ENCODE measurements at regions of chr7 and their contacts with region 1.

Region 1: GRCh38 chr7:51366930-51367613 is 50.5 kb upstream of the COBL start:
- DNase-seq: peak in 40 of 42 donors; percentile 15 to 88 (median 64)

Region 2: DNA sequence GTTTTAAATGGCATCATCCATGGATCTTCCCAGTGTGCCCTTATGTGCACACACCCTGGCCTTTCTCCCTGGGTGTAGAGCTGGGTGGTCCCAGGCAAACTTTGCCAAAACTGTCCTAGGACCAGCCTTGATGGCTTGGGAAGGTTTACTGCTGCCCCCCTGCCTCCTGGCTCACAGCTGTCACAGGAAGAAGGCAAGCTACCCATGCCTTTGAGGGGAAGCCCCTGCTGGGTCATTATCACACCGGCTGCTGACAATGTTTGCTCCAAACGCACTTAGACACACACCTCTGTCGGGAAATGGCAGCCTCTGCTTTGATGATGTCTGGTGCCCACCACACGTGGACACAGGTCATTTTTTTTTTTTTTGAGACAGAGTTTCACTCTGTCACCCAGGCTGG is 891.7 kb before region 1 on chr7:
- intact Hi-C with region 1: no loop called
- DNase-seq: no peak

Region 3: DNA sequence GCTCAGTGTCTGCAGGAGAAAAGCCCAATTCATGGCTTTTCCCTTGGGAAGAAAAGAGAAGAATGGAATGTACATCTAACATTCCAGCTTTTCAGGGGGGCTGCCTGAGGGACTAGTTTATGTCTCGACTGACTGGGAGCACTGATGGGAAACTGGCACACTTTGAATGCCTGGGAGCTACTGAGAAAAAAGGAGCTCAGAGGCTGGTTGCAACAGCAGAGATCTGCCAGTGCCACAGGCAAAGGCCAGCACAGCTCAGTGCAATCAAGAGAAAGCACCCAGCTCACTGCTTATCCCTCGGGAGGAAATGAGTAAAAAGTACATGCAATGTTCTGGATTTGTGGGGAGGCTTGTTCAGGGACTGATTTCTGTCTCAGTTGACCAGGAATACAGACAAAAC is 276.7 kb before region 1 on chr7:
- intact Hi-C with region 1: no loop called
- DNase-seq: peak in 3 of 42 donors; percentile 35 to 40 (median 39)

Region 4: DNA sequence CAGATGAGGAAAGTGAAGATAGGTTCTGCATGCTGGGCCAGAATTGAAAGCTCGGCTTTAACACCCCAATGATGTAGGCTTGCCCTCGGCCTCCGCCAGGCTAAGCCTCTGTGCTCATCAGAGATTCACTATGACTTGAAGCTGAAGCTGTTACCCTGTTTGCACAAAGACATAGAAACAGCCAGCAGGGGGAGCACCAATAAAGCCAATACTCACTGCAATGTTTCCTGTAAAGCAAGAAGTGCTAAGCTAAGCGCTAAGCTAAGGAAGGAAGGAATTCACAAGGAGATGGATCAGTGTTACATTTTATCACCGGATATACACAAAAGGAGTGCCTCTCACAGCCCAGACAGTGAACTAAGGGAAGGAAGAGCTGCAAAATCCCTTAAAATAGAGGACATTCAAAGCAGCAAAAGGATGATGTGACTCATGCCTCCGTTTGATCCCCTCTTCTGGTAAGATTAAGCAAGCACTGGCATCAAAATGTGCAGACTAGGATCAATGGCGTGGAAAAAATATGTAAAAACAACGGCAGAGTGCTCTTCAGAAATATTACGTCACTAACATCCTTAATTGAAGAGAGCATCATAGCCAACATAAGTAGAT is 204.2 kb before region 1 on chr7:
- intact Hi-C with region 1: loop called (anchors 2 kb)
- DNase-seq: peak; percentile 52 to 97 (median 91)

Region 5: DNA sequence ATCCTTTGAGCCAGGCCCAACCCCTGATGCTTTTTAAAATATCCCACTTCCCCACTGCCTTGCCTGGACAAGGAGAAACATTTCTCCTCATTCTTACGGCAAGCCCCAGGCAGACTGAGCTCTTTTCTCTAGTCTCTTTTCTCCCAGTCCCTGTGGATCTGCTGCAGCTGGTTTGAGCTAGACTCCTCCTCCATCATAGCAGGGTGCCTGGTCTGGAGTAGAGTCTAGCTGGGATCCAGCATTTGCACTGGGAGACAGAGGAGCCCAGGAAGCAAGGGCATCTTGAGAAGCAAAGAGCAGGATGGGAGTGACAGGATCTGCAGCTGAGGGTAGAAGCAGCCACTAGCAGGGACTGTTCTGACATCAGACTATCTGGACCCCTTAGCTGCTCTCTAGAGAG is 511.8 kb after region 1 on chr7:
- intact Hi-C with region 1: no loop called
- DNase-seq: no peak